Right ventricle myocardium inferior (tissue), 1 donor: ENCODE measurements at regions of chr7 and their contacts with region 1.

Region 1: DNA sequence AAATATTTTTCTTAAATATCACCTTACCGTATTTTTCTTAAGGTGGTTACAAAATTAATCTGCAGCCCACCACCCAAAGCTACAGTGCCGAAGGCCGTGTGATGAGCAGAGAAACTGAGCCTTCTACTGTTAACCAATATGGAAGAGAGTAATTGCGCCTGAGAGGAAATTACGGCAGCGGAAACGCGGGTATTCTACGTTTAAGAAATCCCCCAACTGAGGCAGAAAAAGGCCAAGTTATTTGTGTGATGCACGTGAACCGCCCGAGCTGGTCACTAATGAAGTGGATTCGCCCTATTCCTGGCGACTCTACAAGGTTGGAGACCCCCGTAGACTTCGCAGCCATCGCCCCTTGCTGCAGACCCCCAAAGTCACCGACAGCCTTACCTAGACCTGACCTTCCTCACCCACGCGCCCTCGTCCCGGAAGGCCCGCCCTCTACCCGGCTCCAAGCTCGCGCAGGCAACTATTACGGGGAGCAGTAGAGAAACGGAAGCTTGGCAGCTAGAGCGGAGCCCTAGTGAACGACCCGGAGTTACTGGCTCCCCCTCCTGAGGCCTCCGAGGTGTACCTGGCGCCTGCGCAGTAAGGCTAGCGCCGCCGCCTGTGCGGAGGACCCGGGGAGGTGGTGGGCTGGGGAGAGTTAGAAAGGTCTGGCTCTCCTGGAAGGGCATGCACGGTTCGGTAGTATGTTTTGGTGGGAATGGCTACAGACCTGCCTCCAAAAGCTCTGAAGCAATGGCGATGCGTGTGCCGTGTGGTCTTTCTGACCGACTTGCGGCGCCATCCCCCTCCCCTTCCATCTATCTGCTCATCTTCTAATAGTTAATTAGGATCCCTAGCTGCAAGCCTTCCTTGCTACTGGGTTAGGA is at the start of gene MRPS33:
- DNase-seq: peak; percentile 96
- ATAC-seq: peak; percentile 100
- total RNA-seq, gene MRPS33: 122 TPM

Region 2: GRCh38 chr7:140673063-140673773 is 341.5 kb before region 1 on chr7:
- intact Hi-C with region 1: loop called (anchors 5 kb)
- DNase-seq: peak; percentile 74
- ATAC-seq: peak; percentile 47

Region 3: DNA sequence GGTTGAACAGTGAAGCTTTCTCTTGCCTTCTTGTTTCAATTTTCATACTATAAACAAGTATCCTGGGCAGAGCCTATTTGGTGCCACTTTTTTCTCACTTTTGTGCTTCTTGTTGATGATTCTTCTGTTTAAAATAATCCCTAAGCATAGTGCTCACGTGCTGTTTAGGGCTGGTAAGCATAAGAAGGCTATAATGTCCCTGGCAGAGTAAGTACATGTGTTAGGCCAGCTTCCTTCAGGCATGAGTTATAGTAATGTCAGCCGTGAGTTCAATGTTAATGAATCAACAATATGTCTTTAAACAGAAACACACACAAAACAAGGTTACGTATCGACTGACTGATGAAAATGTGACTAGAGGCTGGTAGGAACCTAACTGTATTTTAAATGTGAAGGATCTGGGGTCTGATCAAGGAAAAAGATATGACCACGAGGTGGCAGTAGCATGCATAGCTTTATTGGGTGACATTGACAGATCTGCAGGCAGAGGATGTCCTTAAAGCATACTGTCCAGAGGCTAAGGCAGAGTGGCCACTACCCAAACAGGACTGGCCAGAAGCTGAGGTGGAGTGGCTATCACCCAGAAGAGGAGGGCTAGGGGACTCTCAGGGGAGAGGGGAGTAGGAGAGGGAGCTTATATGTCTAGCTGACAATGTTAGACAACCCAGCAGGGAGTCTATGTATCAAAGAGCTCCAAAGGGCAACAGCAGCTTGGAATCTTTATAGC is 203.8 kb before region 1 on chr7:
- intact Hi-C with region 1: loop called (anchors 1 kb)
- DNase-seq: no peak
- ATAC-seq: peak; percentile 91

Region 4: DNA sequence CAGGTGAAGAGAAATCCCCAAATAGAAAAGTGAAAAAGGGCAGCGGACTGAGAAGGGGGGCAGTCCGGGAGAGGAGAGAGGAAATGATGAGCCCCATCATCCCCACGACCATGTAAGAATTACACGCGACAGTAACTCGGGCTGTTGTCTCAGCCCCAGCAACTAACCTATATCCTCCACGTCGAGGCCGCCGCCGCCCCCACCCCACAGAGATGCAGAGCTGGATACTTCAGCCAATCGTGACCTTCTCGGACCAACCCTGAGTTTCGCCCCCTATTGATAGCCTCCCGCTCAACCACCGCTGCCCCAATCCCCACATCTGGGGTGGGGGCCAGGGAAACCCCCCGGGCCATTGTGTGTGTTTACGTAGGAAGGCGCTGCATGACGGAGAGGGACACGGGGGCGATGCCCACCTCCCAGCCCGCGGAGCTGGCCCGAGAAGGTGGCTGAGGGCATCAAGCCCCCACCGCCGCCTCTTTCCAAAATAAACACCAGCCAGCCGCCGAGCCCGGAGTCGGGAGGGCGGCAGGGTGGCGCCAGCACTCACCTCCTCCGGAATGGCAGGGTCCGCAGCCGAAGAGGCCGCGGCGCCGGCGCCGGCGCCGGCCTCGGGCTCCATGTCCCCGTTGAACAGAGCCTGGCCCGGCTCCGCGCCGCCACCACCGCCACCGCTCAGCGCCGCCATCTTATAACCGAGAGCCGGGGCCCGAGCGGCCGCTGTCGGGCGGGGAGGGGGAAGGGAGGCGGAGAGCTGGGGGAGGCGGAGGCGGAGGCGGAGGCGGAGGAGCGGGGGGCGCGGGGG is 90.5 kb before region 1 on chr7:
- intact Hi-C with region 1: loop called (anchors 5 kb)
- DNase-seq: peak; percentile 93
- ATAC-seq: peak; percentile 89

Region 5: DNA sequence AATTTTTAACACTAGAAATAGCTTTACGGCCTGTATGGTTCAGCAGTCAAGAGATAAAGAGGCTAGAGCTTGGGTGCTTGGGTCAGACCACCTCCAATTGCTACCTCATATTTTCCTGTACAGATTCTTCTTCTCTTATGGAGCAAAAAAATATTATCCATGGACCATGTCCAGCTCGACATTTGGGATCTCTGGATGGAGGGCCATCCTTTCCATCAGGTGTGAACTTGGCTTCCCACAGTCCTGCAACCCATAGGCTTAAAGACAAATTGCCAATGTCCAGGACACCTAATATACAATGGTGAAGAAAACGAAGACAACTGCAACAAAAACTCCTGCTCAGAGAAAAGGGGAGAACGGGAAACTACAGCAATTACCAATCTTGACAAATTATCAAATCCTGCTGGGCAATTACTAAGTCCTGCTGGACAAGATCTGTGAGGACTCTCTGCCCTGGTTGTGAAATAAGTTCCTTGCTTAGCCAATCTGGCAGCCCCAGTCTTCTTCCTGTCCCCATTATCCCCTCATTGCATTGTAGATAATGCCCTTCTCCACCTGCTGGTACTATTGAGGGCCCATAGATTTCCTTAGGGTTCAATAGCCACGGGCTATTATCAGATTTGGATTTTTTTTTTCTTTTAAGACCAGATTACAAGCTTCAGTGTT is 48.1 kb before region 1 on chr7:
- intact Hi-C with region 1: no loop called
- DNase-seq: no peak
- ATAC-seq: no peak

Region 6: GRCh38 chr7:141039376-141039775 is 24.6 kb after region 1 on chr7:
- intact Hi-C with region 1: no loop called
- DNase-seq: no peak
- ATAC-seq: no peak

Region 7: DNA sequence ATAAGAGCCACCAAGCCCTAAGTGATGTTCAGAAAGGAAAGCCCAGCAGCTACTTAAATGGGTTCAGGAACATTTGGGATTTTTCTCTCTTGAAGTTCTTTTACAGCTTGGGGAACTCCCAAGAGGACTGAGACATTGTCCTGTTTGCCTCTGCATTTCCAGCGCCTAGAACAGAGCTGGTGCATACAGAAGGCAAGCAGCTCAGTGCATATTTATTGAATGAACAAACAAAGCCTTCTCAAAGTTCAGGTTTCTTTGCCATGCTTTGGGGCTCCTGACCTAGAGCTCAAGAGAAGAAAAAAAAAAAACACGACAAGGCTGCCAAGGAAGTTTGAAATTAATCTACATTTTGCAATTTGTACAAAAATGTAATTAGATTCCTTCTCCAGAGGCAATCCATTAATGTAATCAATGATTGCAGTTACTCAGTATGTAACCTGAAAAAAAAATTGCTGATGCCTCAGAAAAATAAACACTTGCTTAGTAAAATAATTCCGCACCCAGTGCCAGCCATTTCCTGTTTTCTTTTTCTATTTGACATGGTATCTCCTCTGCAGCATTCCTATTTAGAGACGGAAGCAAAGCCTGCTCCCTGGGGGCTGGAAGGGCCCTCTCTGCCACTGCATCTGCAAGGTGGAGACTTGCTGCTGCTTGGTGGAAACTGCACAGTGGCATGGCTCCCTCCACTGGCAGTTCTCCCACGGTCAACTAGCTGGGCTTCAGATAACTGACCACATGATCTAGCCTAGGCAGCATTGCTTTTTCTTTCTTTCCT is 216.4 kb after region 1 on chr7:
- intact Hi-C with region 1: loop called (anchors 10 kb)
- DNase-seq: no peak
- ATAC-seq: peak; percentile 44

Region 8: DNA sequence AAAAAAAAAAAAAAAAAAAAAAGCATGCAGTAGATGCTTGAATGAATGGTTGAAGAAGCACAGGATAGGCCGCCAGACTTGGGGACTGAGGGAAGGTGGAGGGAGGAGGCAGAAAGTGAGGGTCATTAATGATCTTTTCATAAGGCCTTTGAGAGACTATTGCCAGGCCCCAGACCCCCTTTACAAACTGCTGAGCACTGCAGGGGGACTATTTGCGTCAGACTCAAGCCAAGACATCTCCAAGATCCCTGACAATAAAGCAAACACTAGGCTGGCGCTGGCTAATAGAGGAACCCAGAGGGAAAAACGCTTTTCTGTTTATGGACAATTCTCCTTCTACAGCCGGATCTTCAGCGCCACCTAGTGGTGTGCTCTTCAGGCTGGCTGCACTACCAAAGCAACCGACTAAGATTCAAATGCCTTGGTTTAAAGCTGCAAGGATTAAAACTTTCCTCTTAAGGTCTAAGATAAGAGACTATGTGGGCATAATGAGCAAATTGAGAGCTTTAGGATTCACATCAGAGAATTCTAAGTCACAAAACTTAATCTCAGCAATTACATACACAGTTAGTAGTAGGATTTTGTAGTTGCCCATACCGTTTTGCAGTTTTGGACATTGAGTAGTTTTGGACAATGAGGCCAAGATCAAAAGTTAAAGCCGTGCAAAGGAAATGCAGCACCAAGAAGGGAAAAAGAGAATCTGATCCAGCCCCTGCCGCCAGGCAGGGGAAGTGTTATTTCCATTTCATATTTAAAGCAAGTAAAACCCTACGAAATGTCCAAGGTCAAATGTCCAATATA is 518.6 kb after region 1 on chr7:
- intact Hi-C with region 1: loop called (anchors 10 kb)
- DNase-seq: no peak
- ATAC-seq: peak; percentile 79

Region 9: DNA sequence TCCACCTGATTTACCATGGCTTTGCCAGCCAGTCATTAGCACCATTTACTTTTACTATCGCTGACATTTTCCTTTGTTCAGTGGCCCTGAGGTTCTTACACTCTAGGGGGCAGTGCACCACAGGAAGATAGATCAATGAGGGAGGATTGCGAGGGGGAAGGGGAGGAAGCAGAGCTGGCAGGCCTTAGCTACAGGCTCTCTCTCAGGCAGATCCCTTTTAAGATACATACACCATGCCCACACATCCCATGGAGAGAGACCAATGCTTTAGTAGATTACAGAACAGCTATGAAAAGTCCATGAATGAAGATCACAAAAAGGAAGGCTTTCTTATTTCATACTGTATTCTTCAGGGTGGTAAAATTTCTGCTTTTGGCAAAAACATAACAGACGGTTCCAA is 639.8 kb after region 1 on chr7:
- intact Hi-C with region 1: loop called (anchors 10 kb)
- DNase-seq: no peak
- ATAC-seq: peak; percentile 45